GM12878 (cell line): ENCODE measurements at regions of chr6 and their contacts with region 1.

Region 1: DNA sequence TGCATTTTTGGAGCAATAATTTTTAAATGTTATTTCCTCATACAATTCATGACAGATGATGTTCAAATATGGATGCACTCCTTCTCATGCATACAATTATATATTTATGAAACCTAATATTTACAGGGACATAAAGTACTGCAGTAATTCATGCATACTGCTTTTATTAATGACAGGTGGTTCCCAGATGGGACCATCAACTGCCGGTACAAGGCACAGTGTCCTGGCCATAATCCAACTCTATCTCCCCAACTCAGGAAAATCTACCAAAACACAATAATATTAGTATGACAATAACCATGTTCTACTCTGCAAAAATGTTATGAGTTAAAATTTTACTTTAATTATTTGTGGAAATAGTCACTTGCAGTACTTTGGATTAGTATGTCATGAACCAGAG is 77.8 kb downstream of the VIP start:
- DNase-seq: no peak
- ATAC-seq: no peak
- H3K4me3 ChIP-seq: no peak overlapping the region
- H3K27ac ChIP-seq: no peak overlapping the region
- H3K4me1 ChIP-seq: no peaks in the 10 kb centered on the region
- H3K27me3 ChIP-seq: no peaks in the 10 kb centered on the region
- CTCF ChIP-seq: no peak
- EP300 ChIP-seq: no peak
- POLR2A ChIP-seq: no peak
- RAD21 ChIP-seq: no peak

Region 2: GRCh38 chr6:151962246-151962846 is 866.1 kb before region 1 on chr6:
- CTCF ChIA-PET with region 1: no interaction called
- POLR2A ChIA-PET with region 1: no interaction called
- RAD21 ChIA-PET with region 1: no interaction called
- SMC1A ChIA-PET with region 1: no interaction called
- in situ Hi-C with region 1: no loop called
- intact Hi-C with region 1: no loop called
- DNase-seq: no peak
- ATAC-seq: peak; percentile 63
- H3K4me3 ChIP-seq: no peak overlapping the region
- H3K27ac ChIP-seq: no peak overlapping the region
- H3K4me1 ChIP-seq: no peaks in the 10 kb centered on the region
- H3K27me3 ChIP-seq: no peaks in the 10 kb centered on the region; a peak in 1 of 4 replicates
- CTCF ChIP-seq: no peak
- EP300 ChIP-seq: no peak
- POLR2A ChIP-seq: no peak
- RAD21 ChIP-seq: no peak

Region 3: GRCh38 chr6:152509916-152510315 is 318.5 kb before region 1 on chr6:
- CTCF ChIA-PET with region 1: no interaction called
- POLR2A ChIA-PET with region 1: no interaction called
- RAD21 ChIA-PET with region 1: no interaction called
- SMC1A ChIA-PET with region 1: no interaction called
- in situ Hi-C with region 1: no loop called
- intact Hi-C with region 1: loop called (anchors 5 kb)
- DNase-seq: no peak
- ATAC-seq: no peak
- H3K4me3 ChIP-seq: no peak overlapping the region
- H3K27ac ChIP-seq: no peak overlapping the region
- H3K4me1 ChIP-seq: no peaks in the 10 kb centered on the region
- H3K27me3 ChIP-seq: no peaks in the 10 kb centered on the region
- CTCF ChIP-seq: no peak
- EP300 ChIP-seq: no peak
- POLR2A ChIP-seq: no peak
- RAD21 ChIP-seq: no peak

Region 4: GRCh38 chr6:152794696-152795095 is 33.7 kb before region 1 on chr6:
- CTCF ChIA-PET with region 1: no interaction called
- POLR2A ChIA-PET with region 1: no interaction called
- RAD21 ChIA-PET with region 1: no interaction called
- SMC1A ChIA-PET with region 1: no interaction called
- in situ Hi-C with region 1: no loop called
- intact Hi-C with region 1: no loop called
- DNase-seq: no peak
- ATAC-seq: no peak
- H3K4me3 ChIP-seq: no peak overlapping the region
- H3K27ac ChIP-seq: no peak overlapping the region
- H3K4me1 ChIP-seq: no peaks in the 10 kb centered on the region
- H3K27me3 ChIP-seq: no peaks in the 10 kb centered on the region
- CTCF ChIP-seq: no peak
- EP300 ChIP-seq: no peak
- POLR2A ChIP-seq: no peak
- RAD21 ChIP-seq: no peak